ENCODE measurements at regions of chr2 and their contacts with region 1.

Region 1: GRCh38 chr2:173075781-173076580 is at the start of gene MAP3K20:
- DNase-seq: peak; percentile 92
- total RNA-seq, gene MAP3K20: 138 to 167 TPM

Region 2: GRCh38 chr2:173027181-173028128 is 48.5 kb before region 1 on chr2:
- intact Hi-C with region 1: loop called in 1 of 2 experiments (anchors 1 kb)
- DNase-seq: no peak

Region 3: DNA sequence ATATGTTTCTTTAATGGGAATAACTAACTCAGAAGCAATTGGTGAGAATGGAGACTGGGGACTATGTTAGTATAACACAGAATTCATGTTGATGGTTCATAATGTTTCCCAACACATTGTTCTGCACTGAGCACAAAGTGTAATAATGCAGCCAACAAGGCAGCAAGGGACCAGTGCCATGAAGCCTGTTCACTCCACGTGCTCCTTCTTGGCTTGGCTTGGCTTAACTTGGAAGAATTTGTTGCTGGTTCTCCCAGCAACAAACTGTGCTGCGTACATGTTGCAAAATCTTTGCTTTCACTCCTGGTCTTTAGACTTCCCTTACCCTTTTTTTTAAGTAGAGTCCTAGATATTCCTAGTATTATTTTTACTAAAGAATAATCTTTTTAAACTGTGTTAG is 129.4 kb after region 1 on chr2:
- intact Hi-C with region 1: loop called in 1 of 2 experiments (anchors 5 kb)
- DNase-seq: peak; percentile 87